ENCODE measurements at regions of chr19 and their contacts with region 1.

Region 1: GRCh38 chr19:15810335-15810734 is 5.1 kb downstream of the OR10H1 start:
- DNase-seq: no peak
- ATAC-seq: no peak
- H3K4me3 Mint-ChIP-seq: no peak overlapping the region
- H3K27ac Mint-ChIP-seq: no peak overlapping the region
- H3K4me1 Mint-ChIP-seq: peaks cover 6% of the 10 kb centered on the region
- H3K27me3 Mint-ChIP-seq: peaks cover 8% of the 10 kb centered on the region

Region 2: GRCh38 chr19:15583346-15583745 is 227.0 kb before region 1 on chr19:
- CTCF ChIA-PET with region 1: no interaction called
- POLR2A ChIA-PET with region 1: no interaction called
- intact Hi-C with region 1: no loop called
- DNase-seq: no peak
- ATAC-seq: no peak
- H3K4me3 Mint-ChIP-seq: no peak overlapping the region
- H3K27ac Mint-ChIP-seq: no peak overlapping the region
- H3K4me1 Mint-ChIP-seq: peaks cover 3% of the 10 kb centered on the region
- H3K27me3 Mint-ChIP-seq: peaks cover 14% of the 10 kb centered on the region

Region 3: DNA sequence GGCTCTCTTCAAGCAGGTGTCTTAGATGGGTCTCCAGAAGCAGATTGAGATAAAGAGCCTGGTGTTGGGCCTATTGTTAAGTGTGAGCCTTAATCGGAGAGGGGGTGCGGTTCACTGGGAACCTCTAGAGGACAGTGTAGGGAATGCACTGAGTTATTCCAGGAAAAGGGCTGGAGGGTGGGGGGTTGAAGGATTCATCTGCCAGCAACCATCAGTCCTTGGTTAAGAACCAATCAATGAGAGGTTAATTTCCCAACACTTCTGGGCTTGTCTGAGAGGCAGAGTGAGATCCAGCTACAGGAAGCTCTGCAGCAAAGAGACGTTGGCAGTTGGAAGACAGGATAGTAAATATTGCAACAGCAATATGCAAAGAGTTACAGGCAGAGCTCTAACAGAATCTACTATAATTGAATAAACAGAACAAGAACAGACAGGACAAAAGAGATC is 58.8 kb after region 1 on chr19:
- CTCF ChIA-PET with region 1: no interaction called
- POLR2A ChIA-PET with region 1: no interaction called
- intact Hi-C with region 1: loop called in 1 of 2 experiments (anchors 5 kb)
- DNase-seq: peak; percentile 50
- ATAC-seq: peak; percentile 74
- H3K4me3 Mint-ChIP-seq: no peak overlapping the region
- H3K27ac Mint-ChIP-seq: no peak overlapping the region
- H3K4me1 Mint-ChIP-seq: peaks cover 3% of the 10 kb centered on the region
- H3K27me3 Mint-ChIP-seq: peaks cover 5% of the 10 kb centered on the region

Measured in activated CD4-positive, alpha-beta T cell treated with anti-CD3 and anti-CD28 coated beads for 36 hours (primary cell).